WTC11 (cell line): ENCODE measurements at regions of chr9 and their contacts with region 1.

Region 1: GRCh38 chr9:136587145-136587943 is 41.5 kb upstream of the NOTCH1 start:
- DNase-seq: peak; percentile 86
- ATAC-seq: peak; percentile 58
- H3K4me3 Mint-ChIP-seq: peak overlapping the region; percentile 29
- H3K27ac Mint-ChIP-seq: no peak overlapping the region; the same call in 1 of the 2 replicates
- H3K4me1 Mint-ChIP-seq: peaks cover 39% of the 10 kb centered on the region
- H3K27me3 Mint-ChIP-seq: no peaks in the 10 kb centered on the region; the same call in 1 of the 2 replicates
- CTCF ChIP-seq: no peak

Region 2: DNA sequence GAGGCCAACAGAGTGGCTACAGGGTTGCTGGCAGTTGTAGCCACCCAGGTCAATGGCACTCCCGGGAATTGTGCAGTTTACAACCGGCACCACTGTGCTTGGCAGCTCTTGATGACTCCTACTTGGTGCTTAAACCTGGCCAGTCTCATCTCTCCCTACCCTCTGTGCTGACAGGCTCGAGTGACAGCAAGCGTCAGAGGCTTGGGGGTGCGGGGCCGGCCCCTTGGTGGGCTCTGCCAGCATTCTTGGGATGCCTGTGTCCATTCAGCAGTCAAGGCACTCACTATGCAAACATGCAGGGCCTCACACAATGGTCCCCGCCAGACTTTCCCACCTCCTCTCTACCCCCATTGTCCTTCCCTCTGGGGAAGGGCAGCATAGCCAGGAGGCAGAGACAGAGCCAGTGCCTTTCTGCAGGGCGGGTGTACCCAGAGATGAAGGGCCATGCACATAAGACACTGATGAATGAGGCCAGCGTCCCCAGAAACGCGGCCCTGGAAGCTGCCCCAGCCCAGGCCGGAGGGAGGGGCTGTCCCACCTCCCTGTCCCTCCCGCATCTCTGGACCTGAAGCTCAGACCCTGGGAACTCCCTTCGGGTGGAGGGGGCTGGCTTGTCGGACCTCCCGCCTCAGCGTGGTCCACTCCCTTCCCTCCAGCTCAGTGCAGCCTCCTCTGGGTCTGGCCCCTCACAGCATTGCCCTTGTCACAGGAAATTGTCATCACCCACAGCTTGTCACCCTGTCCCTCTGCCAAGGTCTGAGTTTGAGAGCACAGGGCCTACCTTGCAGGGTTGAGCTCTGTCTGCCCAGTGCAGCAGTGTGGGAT is 15.1 kb before region 1 on chr9:
- CTCF ChIA-PET with region 1: interaction called, 16 read pairs
- POLR2A ChIA-PET with region 1: interaction called, 28 read pairs
- DNase-seq: peak; percentile 93
- ATAC-seq: peak; percentile 87
- H3K4me3 Mint-ChIP-seq: peak overlapping the region; percentile 44
- H3K27ac Mint-ChIP-seq: peak overlapping the region; percentile 99
- H3K4me1 Mint-ChIP-seq: peaks cover 55% of the 10 kb centered on the region
- H3K27me3 Mint-ChIP-seq: no peaks in the 10 kb centered on the region; the same call in 1 of the 2 replicates
- CTCF ChIP-seq: no peak

Region 3: DNA sequence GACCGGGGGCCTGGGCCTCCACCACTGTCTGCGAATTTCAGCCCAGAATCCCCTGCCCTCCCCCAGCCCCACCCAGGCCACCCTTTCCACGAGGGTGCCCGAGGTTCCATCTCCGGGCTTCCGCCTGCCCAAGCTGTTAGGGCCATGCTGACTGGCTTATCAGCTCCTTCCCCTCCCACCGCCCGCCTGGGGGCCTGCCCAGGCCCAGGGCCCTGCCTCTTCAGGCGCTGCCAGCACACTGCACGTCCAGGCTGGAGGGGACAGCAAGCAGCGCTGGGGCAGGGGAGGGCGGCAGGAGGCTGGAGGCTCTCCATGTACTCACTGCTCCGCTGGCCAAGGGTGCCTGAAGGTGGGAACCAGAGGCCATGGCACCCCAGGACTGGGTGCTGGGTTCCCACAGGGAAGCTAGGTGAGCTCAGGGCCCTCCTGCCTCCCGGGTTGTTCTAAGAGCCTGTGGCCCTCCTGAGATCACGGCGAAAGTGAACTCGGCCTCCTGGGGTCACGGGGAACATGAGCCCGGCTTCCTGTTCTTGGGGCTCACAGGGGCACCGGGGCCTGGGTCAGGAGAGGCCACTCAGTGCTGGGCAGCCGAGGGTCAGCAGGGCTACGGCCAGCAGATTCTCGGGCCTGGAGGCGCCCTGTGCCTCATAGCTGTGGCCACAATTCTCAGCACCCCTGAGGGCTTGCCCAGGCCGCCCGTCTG is 17.6 kb after region 1 on chr9:
- CTCF ChIA-PET with region 1: interaction called, 11 read pairs
- POLR2A ChIA-PET with region 1: interaction called, 9 read pairs
- DNase-seq: no peak
- ATAC-seq: 0 out of 2 replicates have a peak, but pooled peaks have one; percentile 9
- H3K4me3 Mint-ChIP-seq: no peak overlapping the region
- H3K27ac Mint-ChIP-seq: no peak overlapping the region
- H3K4me1 Mint-ChIP-seq: peaks cover 34% of the 10 kb centered on the region
- H3K27me3 Mint-ChIP-seq: peaks cover 5% of the 10 kb centered on the region
- CTCF ChIP-seq: no peak